Mammary epithelial cell (primary cell): ENCODE measurements at regions of chr15 and their contacts with region 1.

Region 1: DNA sequence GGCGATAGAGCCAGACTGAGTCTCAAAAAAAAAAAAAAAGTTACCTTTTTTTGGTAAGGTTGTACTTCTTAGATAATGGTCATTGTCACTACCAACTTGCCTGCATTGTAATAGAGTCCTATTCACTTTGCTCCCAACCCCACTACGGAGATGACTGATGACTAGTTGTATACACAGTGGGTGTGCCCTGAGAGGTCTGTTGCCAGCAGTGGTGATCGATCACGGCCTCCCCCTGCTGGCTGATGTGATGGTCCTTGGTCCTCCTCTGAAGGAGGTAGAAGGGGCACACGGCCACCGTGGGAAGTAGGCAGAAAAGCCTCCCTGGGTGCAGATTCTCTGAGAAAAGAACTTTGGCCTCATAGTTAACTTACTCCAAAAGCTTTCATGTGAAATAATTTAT is 10.7 kb downstream of the GCNT3 start:
- DNase-seq: peak; percentile 66
- H3K4me3 ChIP-seq: no peak overlapping the region
- H3K27ac ChIP-seq: no peak overlapping the region
- H3K4me1 ChIP-seq: peaks cover 7% of the 10 kb centered on the region
- H3K27me3 ChIP-seq: no peaks in the 10 kb centered on the region
- CTCF ChIP-seq: peak; percentile 29 to 56

Region 2: DNA sequence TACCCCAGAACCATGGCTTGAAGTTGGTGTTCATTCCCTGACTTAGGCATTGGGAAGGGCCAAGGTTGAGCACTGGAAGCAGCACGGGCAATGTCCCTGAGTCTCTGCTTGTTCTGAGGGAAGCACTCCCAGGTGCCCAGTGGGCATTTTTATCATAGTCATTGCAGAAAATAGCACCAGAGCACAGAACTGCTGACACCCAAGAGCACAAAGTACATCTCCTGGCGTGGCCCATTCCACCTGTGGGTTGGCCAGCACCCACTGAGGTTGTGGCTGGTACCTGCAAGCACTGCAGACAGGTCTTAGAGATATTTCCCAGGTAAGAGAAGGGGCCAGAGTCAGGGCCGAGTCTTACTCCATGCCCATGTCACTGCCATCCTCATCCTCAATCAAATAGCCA is 39.2 kb before region 1 on chr15:
- CTCF ChIA-PET with region 1: no interaction called
- dilution Hi-C with region 1: loop called (anchors 5 kb)
- in situ Hi-C with region 1: no loop called
- intact Hi-C with region 1: no loop called
- DNase-seq: no peak
- H3K4me3 ChIP-seq: no peak overlapping the region
- H3K27ac ChIP-seq: no peak overlapping the region
- H3K4me1 ChIP-seq: peaks cover 10% of the 10 kb centered on the region
- H3K27me3 ChIP-seq: no peaks in the 10 kb centered on the region
- CTCF ChIP-seq: no peak